Psoas muscle (tissue), 8 donors: ENCODE measurements at regions of chr4 and their contacts with region 1.

Region 1: DNA sequence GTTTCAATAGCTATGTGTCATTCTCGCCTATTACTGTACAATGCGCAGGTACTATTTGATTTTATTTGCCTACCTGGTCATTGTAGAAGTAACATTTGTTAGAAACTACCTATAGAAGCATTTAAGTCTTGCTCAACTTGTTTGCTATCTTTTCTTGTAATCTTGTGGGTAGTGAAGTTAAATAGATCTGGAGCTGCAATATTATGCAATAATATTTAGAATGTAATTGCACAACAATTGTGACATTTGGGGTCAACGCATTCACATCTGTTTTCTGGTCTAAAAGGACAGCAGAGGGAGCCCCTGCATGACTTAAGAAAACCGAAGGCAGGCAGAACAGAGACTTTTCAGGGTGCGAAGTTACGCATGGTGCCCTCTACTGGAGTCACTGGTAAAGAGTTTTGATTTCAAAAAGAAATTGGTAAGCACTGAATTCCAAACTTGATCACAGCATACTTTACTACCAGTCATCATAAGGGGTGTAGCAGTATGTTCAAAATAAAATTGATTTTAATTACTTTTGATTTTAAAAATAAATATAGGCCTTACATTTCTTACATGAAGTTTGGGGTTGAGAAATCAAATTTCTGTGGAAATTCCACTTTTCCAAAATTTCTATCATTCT is 503.2 kb upstream of the FAM241A start:
- DNase-seq: peak; percentile 16 to 52
- ATAC-seq: peak in 3 of 4 donors; percentile 52 to 87 (median 62)
- H3K4me3 ChIP-seq: no peak overlapping the region
- H3K27ac ChIP-seq: no peak overlapping the region
- H3K4me1 ChIP-seq: no peaks in the 10 kb centered on the region
- H3K27me3 ChIP-seq: no peaks in the 10 kb centered on the region
- CTCF ChIP-seq: peak; percentile 65

Region 2: GRCh38 chr4:111854494-111855087 is 212.5 kb after region 1 on chr4:
- intact Hi-C with region 1: loop called in 1 of 2 experiments (anchors 2 kb)
- DNase-seq: no peak
- ATAC-seq: no peak
- H3K4me3 ChIP-seq: no peak overlapping the region
- H3K27ac ChIP-seq: no peak overlapping the region
- H3K4me1 ChIP-seq: no peaks in the 10 kb centered on the region
- H3K27me3 ChIP-seq: no peaks in the 10 kb centered on the region
- CTCF ChIP-seq: peak; percentile 58

Region 3: DNA sequence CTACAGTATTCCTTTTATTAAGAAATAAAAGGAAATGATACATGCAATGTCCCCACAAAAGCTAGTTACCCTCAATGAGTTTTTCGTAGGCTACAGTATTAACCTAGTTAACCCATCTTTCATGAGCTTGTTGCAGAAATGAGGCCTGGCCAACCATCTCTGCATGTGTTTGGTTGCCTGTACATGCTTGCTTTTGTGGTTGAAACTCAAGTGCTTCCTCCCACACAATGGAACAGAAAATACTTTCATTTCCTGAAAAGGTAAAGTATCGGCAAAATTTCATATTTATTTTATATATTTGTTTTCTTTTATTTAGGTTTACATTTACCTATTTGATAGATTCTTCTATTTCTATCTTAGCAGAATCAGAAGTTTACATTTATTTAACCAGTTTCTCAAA is 288.6 kb after region 1 on chr4:
- intact Hi-C with region 1: no loop called
- DNase-seq: no peak
- ATAC-seq: no peak
- H3K4me3 ChIP-seq: no peak overlapping the region
- H3K27ac ChIP-seq: no peak overlapping the region
- H3K4me1 ChIP-seq: no peaks in the 10 kb centered on the region
- H3K27me3 ChIP-seq: no peaks in the 10 kb centered on the region
- CTCF ChIP-seq: no peak

Region 4: GRCh38 chr4:112031712-112032328 is 389.8 kb after region 1 on chr4:
- intact Hi-C with region 1: loop called in 1 of 2 experiments (anchors 5 kb)
- DNase-seq: no peak
- ATAC-seq: no peak
- H3K4me3 ChIP-seq: no peak overlapping the region
- H3K27ac ChIP-seq: no peak overlapping the region
- H3K4me1 ChIP-seq: no peaks in the 10 kb centered on the region
- H3K27me3 ChIP-seq: peaks cover 0 to 5% (median 0%) of the 10 kb centered on the region in 3 donors
- CTCF ChIP-seq: peak; percentile 49